B cell (primary cell): ENCODE measurements at regions of chrX and their contacts with region 1.

Region 1: DNA sequence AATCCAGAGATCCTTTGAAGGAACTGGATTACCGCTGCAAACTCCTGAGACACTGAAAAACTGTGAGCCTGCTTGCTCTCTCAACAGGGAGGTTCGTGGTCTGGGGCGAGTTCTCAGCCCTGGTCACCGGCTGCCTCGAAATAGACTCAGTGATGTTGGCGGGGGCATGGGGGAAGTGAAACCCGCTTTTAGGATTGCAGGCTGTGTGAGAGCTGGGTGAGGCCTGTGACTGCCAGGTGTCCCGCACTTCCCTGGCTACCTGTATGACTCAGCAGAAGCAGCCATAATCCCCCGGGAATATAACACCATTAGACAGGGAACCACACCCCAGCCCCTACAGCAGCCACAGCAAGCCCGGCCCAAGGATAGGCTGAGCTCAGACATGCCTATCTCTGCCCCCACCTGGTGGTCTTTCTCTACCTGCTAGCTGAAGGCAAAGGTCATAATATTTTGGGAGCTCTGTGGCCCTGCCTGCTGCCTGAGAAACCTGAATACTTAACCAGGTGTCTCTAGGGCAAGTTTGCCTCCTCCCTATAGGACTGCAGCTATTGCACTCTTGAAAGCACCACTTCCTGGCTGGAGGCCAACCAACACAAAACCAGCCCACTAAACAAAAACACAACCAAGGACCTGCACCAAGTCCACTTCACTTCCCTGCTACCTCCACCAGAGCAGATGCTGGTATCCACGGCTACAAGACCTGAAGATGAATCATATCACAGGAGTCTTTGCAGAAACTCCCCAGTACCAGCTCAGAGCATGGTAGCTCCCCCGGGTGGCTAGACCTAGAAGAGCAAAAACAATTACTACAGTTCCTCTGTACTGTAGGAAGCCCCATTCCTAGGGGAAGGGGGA is 202.0 kb downstream of the RRAGB start:
- DNase-seq: peak; percentile 79
- ATAC-seq: peak; percentile 88
- H3K4me3 ChIP-seq: peak overlapping the region in 2 of 5 experiments; percentile 6 to 29
- H3K4me3 Mint-ChIP-seq: peak overlapping the region; percentile 52
- H3K27ac ChIP-seq: peak overlapping the region; percentile 47 to 60
- H3K27ac Mint-ChIP-seq: peak overlapping the region; percentile 86
- H3K4me1 ChIP-seq: peaks cover 19 to 20% of the 10 kb centered on the region in 2 donors
- H3K4me1 Mint-ChIP-seq: peaks cover 39% of the 10 kb centered on the region
- H3K27me3 ChIP-seq: no peaks in the 10 kb centered on the region
- H3K27me3 Mint-ChIP-seq: no peaks in the 10 kb centered on the region
- CTCF ChIP-seq: no peak

Region 2: GRCh38 chrX:55640854-55641253 is 278.7 kb before region 1 on chrX:
- CTCF ChIA-PET with region 1: no interaction called
- POLR2A ChIA-PET with region 1: no interaction called
- intact Hi-C with region 1: loop called (anchors 10 kb)
- DNase-seq: peak; percentile 28
- ATAC-seq: no peak
- H3K4me3 ChIP-seq: no peak overlapping the region
- H3K4me3 Mint-ChIP-seq: no peak overlapping the region
- H3K27ac ChIP-seq: no peak overlapping the region
- H3K27ac Mint-ChIP-seq: no peak overlapping the region
- H3K4me1 ChIP-seq: peaks cover 0 to under 1% of the 10 kb centered on the region in 2 donors
- H3K4me1 Mint-ChIP-seq: peaks cover 11% of the 10 kb centered on the region
- H3K27me3 ChIP-seq: no peaks in the 10 kb centered on the region
- H3K27me3 Mint-ChIP-seq: no peaks in the 10 kb centered on the region
- CTCF ChIP-seq: no peak

Region 3: DNA sequence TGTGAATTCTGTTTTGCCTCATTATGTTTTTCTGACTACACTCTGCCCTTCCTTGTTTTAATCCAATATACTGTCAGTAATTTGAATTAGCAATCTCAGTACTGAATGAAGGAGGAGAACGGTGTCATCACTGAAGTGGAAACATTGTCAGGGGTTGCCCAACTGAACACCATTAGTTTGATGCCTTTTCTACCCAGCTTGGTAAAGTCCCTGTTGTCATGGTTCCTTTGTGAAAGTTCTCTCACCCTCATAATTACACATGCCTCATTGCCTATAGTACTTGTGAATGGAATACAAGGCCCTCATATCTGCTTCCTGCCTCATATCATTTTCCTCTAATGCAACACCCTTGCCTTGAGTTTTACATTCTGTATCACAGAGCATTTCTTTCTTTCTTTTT is 125.2 kb before region 1 on chrX:
- CTCF ChIA-PET with region 1: no interaction called
- POLR2A ChIA-PET with region 1: no interaction called
- intact Hi-C with region 1: no loop called
- DNase-seq: peak; percentile 29
- ATAC-seq: peak; percentile 51
- H3K4me3 ChIP-seq: no peak overlapping the region
- H3K4me3 Mint-ChIP-seq: no peak overlapping the region
- H3K27ac ChIP-seq: no peak overlapping the region
- H3K27ac Mint-ChIP-seq: no peak overlapping the region
- H3K4me1 ChIP-seq: peaks cover 0 to 4% of the 10 kb centered on the region in 2 donors
- H3K4me1 Mint-ChIP-seq: peaks cover 8% of the 10 kb centered on the region
- H3K27me3 ChIP-seq: no peaks in the 10 kb centered on the region
- H3K27me3 Mint-ChIP-seq: no peaks in the 10 kb centered on the region
- CTCF ChIP-seq: no peak

Region 4: DNA sequence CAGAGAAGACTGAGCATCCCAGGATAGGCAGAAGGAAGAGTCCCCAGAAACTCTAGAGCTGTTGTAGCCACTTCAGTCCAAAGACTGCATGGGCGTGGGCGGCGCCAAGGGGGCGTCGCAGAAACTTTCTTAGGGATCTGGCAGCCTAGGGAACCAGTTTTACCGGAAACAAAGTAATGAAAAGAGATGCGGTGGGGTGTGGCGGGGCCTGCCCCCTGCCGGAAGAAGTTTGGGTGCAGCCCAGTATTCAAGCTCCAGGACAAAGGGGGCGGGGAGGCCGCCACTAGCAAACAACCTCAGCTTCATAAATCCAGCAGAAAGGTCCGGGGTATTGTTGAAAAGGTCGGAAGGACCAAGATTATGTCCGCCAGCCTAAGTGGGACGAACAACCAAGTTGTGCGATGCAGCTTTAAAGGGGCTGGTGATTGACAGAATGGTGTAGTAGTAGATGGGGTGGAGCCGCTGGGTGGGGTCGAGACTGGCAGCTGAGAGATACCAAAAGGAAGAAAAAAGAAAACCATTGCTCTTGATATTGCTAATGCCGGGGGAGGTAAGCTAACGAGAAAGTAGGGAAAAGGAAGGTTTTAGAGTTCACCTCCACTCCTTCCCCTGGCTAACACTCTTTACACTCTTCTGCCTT is 11.5 kb before region 1 on chrX:
- CTCF ChIA-PET with region 1: interaction called, 13 read pairs
- POLR2A ChIA-PET with region 1: interaction called, 10 read pairs
- intact Hi-C with region 1: loop called (anchors 1 kb)
- DNase-seq: peak; percentile 65
- ATAC-seq: peak; percentile 77
- H3K4me3 ChIP-seq: peak overlapping the region; percentile 65 to 71 (median 68)
- H3K4me3 Mint-ChIP-seq: peak overlapping the region; percentile 98
- H3K27ac ChIP-seq: peak overlapping the region; percentile 57 to 61
- H3K27ac Mint-ChIP-seq: peak overlapping the region; percentile 96
- H3K4me1 ChIP-seq: peaks cover 13 to 18% of the 10 kb centered on the region in 2 donors
- H3K4me1 Mint-ChIP-seq: peaks cover 32% of the 10 kb centered on the region
- H3K27me3 ChIP-seq: no peaks in the 10 kb centered on the region
- H3K27me3 Mint-ChIP-seq: no peaks in the 10 kb centered on the region
- CTCF ChIP-seq: peak; percentile 57

Region 5: DNA sequence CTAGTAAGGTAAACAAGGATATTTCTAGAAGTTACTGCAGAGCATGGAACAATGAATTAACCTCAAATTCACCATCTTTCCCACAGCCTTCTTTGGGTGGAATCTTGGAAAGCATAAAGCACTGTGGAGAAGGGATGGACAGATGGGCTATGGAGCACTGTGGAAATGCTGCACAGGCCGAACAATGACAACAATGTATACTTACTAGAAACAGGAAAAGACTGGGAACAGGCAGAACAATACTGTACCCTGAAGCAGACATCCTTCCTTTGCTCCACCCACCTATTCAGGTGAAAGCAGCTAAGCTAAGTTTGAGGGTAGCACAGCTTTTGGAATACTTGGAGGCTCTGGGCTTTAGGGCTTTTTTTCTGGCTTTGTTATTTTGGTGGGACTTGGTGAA is 62.0 kb after region 1 on chrX:
- CTCF ChIA-PET with region 1: no interaction called
- POLR2A ChIA-PET with region 1: no interaction called
- intact Hi-C with region 1: loop called (anchors 10 kb)
- DNase-seq: no peak
- ATAC-seq: no peak
- H3K4me3 ChIP-seq: no peak overlapping the region
- H3K4me3 Mint-ChIP-seq: no peak overlapping the region
- H3K27ac ChIP-seq: no peak overlapping the region
- H3K27ac Mint-ChIP-seq: peak overlapping the region; percentile 71
- H3K4me1 ChIP-seq: peaks cover 4 to 5% of the 10 kb centered on the region in 2 donors
- H3K4me1 Mint-ChIP-seq: peaks cover 19% of the 10 kb centered on the region
- H3K27me3 ChIP-seq: no peaks in the 10 kb centered on the region
- H3K27me3 Mint-ChIP-seq: no peaks in the 10 kb centered on the region
- CTCF ChIP-seq: no peak

Region 6: DNA sequence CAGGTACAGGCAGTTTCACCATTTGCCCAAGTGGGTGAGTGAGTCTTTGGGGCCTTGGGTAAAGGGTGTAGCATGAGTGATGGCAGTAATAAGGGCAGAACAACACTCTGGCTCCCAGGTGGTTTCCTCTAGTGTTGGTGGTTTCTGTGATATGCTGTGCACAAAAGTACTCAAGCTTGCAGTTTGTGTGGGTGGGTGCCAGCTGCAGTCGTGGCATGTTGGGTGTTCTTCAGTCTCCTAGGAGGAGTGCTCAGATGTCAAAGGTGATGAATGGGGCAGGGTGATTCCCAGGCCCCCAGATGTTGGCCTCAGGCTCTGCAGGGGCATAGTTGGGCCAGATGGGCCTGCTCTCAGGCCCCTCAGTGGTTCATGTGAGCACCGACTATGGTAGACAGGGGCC is 146.4 kb after region 1 on chrX:
- CTCF ChIA-PET with region 1: interaction called, 15 read pairs
- POLR2A ChIA-PET with region 1: interaction called, 7 read pairs
- intact Hi-C with region 1: loop called (anchors 1 kb)
- DNase-seq: peak; percentile 73
- ATAC-seq: peak; percentile 60
- H3K4me3 ChIP-seq: no peak overlapping the region
- H3K4me3 Mint-ChIP-seq: peak overlapping the region; percentile 46
- H3K27ac ChIP-seq: peak overlapping the region; percentile 81 to 99
- H3K27ac Mint-ChIP-seq: peak overlapping the region; percentile 91
- H3K4me1 ChIP-seq: peaks cover 50 to 53% of the 10 kb centered on the region in 2 donors
- H3K4me1 Mint-ChIP-seq: peaks cover 76% of the 10 kb centered on the region
- H3K27me3 ChIP-seq: no peaks in the 10 kb centered on the region
- H3K27me3 Mint-ChIP-seq: no peaks in the 10 kb centered on the region
- CTCF ChIP-seq: no peak

Region 7: DNA sequence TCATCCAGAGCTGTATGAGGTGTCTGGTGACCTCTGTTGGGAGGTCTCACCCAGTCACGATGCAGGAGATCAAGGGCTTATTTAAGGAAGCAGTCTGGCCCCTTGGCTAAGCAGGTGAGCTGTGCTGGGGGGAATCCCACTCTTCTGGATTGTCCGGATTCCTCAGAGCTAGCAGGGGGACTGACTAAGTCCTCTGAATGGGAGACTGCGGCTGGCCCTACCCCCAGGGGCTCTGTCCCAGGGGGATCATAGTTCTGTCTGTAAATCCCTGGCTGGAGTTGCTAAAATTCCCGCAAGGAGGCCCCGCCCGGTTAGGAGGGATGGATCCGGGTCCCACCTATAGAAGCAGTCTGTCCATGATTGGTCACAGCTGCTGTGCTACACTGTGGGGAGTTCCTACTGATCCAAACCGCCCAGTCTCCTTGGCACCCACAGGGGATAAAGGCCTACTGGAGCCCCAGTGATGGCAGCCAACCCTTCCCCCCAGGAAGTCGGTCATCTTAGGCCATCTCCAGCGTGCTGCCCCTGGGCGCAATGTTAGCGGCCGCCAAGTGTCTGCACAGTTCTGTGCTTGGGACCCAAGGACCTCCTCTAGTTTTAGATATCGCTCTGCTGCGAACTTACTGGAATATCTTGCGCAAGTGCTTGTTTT is 194.3 kb after region 1 on chrX:
- CTCF ChIA-PET with region 1: no interaction called
- POLR2A ChIA-PET with region 1: no interaction called
- intact Hi-C with region 1: no loop called
- DNase-seq: no peak
- ATAC-seq: no peak
- H3K4me3 ChIP-seq: no peak overlapping the region
- H3K4me3 Mint-ChIP-seq: no peak overlapping the region
- H3K27ac ChIP-seq: no peak overlapping the region
- H3K27ac Mint-ChIP-seq: no peak overlapping the region
- H3K4me1 ChIP-seq: no peaks in the 10 kb centered on the region
- H3K4me1 Mint-ChIP-seq: peaks cover 4% of the 10 kb centered on the region
- H3K27me3 ChIP-seq: no peaks in the 10 kb centered on the region
- H3K27me3 Mint-ChIP-seq: no peaks in the 10 kb centered on the region
- CTCF ChIP-seq: no peak

Region 8: GRCh38 chrX:56232221-56233082 is 312.9 kb after region 1 on chrX and contains the start of gene KLF8:
- CTCF ChIA-PET with region 1: interaction called, 5 read pairs
- POLR2A ChIA-PET with region 1: interaction called, 4 read pairs
- intact Hi-C with region 1: loop called (anchors 2 kb)
- DNase-seq: peak; percentile 64
- ATAC-seq: peak; percentile 80
- H3K4me3 ChIP-seq: peak within 1 kb of the TSS; percentile 11 to 76 (median 58)
- H3K4me3 Mint-ChIP-seq: peak within 1 kb of the TSS; percentile 88
- H3K27ac ChIP-seq: peak within 1 kb of the TSS; percentile 50 to 64
- H3K27ac Mint-ChIP-seq: peak within 1 kb of the TSS; percentile 90
- H3K4me1 ChIP-seq: peaks cover 19 to 25% of the 10 kb centered on the region in 2 donors
- H3K4me1 Mint-ChIP-seq: peaks cover 37% of the 10 kb centered on the region
- H3K27me3 ChIP-seq: no peaks in the 10 kb centered on the region
- H3K27me3 Mint-ChIP-seq: no peaks in the 10 kb centered on the region
- CTCF ChIP-seq: no peak
- total RNA-seq, gene KLF8: 42.7 and 43.1 TPM in 2 replicates

Region 9: GRCh38 chrX:56729152-56729850 is 809.7 kb after region 1 on chrX and contains the start of gene NBDY:
- CTCF ChIA-PET with region 1: no interaction called
- POLR2A ChIA-PET with region 1: no interaction called
- intact Hi-C with region 1: loop called (anchors 5 kb)
- DNase-seq: peak; percentile 53
- ATAC-seq: peak; percentile 76
- H3K4me3 ChIP-seq: peak within 1 kb of the TSS; percentile 67 to 78 (median 71)
- H3K4me3 Mint-ChIP-seq: peak within 1 kb of the TSS; percentile 96
- H3K27ac ChIP-seq: peak within 1 kb of the TSS; percentile 78 to 86
- H3K27ac Mint-ChIP-seq: peak within 1 kb of the TSS; percentile 90
- H3K4me1 ChIP-seq: peaks cover 5 to 11% of the 10 kb centered on the region in 2 donors
- H3K4me1 Mint-ChIP-seq: peaks cover 28% of the 10 kb centered on the region
- H3K27me3 ChIP-seq: no peaks in the 10 kb centered on the region
- H3K27me3 Mint-ChIP-seq: no peaks in the 10 kb centered on the region
- CTCF ChIP-seq: no peak
- total RNA-seq, gene NBDY: 31.8 and 36.5 TPM in 2 replicates